Activated naive CD8-positive, alpha-beta T cell treated with anti-CD3 and anti-CD28 coated beads, Interleukin-2, amount 10 ng/mL, durations not matched to agents 7 days and 5 days (primary cell): ENCODE measurements at regions of chr17 and their contacts with region 1.

Region 1: DNA sequence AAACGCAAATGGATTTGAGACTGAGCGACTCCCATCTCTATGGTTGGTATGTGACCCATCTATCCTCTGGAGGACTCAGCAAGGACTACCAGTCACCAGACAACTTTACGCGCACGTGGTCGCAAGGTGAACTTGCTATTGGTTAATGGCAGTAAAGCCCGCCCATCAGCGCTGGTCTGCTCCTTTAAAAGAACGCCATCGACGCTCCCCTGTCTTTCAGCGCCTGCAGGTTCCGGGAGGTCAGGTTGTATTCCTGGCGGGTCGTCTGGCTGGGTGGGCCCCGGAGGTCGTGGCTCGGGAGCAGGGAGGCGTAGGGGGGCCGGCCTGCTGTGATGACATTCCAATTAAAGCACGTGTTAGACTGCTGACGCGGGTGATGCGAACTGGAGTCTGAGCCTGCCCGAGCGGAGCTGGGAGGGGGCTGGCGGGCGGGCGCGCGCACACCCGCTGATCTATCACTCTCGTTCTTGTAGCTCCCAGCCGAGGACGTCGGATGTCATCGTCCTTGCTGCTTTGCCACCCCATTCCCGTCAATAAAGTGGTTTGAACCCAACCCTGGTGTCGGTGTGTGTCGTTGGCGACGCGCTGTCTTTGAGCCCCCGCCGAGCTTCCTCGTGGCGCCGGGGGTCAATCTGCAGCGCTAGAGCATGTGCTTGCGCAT is 15.9 kb upstream of the ERN1 start:
- DNase-seq: peak; percentile 86
- ATAC-seq: peak; percentile 97
- H3K4me3 Mint-ChIP-seq: no peak overlapping the region
- H3K27ac Mint-ChIP-seq: no peak overlapping the region
- H3K4me1 Mint-ChIP-seq: peaks cover 25% of the 10 kb centered on the region
- H3K27me3 Mint-ChIP-seq: no peaks in the 10 kb centered on the region

Region 2: DNA sequence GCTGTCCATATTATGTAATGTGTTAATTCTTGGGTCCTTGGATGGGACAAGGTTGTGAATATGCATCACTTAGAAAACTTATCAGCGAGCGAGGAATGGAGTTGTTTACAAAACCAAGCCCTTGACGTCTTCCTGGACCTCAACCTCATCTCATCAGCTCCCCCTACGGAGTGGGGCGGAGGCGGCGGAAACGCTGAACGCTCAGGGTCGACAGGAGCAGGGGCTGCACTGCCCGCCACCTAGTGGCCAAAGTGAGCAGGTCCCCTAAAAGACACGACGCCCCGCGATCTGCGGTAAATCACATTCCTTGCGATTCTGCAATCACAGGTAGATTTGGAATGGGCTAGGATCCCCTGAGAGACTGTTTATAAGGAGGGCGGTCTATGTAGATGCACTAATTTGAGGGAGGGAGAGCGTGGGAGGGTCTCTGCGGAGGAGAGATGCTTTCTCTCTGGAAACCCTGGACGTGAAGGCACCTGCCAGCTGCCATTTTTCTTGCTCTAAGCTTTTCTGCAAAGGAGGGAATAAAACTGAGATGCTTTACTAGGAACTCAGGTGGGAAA is 120.1 kb before region 1 on chr17:
- POLR2A ChIA-PET with region 1: interaction called, 24 read pairs
- DNase-seq: peak; percentile 87
- ATAC-seq: peak; percentile 91
- H3K4me3 Mint-ChIP-seq: peak overlapping the region; percentile 78
- H3K27ac Mint-ChIP-seq: peak overlapping the region; percentile 85
- H3K4me1 Mint-ChIP-seq: peaks cover 45% of the 10 kb centered on the region
- H3K27me3 Mint-ChIP-seq: no peaks in the 10 kb centered on the region

Region 3: GRCh38 chr17:64190488-64190887 is 44.6 kb after region 1 on chr17:
- POLR2A ChIA-PET with region 1: no interaction called
- DNase-seq: no peak
- ATAC-seq: no peak
- H3K4me3 Mint-ChIP-seq: no peak overlapping the region
- H3K27ac Mint-ChIP-seq: no peak overlapping the region
- H3K4me1 Mint-ChIP-seq: no peaks in the 10 kb centered on the region
- H3K27me3 Mint-ChIP-seq: no peaks in the 10 kb centered on the region

Region 4: DNA sequence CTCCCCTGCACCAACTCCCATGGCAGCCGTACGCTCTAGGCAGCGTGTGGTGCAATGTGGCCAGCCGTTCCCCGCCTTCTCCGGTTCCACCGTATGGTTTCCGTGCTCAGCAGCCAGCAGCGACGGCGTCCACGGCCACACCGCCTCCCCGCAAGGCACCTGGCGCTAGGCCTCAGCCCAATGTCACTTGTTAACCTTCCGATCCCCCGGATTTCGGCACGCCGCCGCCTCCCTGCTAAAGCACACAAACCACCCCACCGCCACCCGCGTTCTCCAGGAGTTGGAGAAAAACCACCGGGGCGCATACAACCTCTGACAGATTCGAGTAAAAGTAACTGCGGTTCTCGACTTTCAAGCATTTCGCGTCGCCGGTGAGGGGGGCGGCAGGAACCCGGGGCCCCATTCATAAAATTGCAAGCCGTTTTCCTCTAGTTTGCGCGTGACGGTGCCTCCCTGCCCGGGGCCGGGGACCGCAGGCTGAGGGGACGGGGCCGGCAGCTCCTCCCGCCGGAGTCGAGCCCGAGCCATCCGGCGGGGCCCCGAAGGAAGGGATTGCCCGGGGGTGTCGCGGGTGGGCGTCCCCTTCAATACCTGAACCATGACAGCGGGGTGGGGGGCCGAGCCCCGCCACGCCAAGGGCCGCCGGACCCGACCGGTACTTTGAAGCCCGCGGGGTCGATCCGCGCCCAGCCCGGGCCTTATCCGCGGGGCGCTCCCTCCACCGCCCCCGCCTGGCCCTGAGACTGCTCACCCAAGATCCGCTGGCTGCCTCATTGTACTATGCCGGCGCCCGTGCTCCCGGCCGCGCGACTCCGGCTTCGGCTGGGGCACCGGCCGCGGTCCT is 116.8 kb after region 1 on chr17 and contains the start of gene TEX2:
- POLR2A ChIA-PET with region 1: interaction called, 35 read pairs
- DNase-seq: peak; percentile 74
- ATAC-seq: peak; percentile 39
- H3K4me3 Mint-ChIP-seq: peak within 1 kb of the TSS; percentile 96
- H3K27ac Mint-ChIP-seq: peak within 1 kb of the TSS; percentile 90
- H3K4me1 Mint-ChIP-seq: peaks cover 30% of the 10 kb centered on the region
- H3K27me3 Mint-ChIP-seq: peaks cover 5% of the 10 kb centered on the region
- total RNA-seq, gene TEX2: 12.0 to 12.8 TPM